ENCODE measurements at regions of chr1 and their contacts with region 1.

Region 1: GRCh38 chr1:181088079-181089016 is at the start of gene IER5:
- DNase-seq: peak; percentile 98 to 99
- H3K4me3 ChIP-seq: peak within 1 kb of the TSS; percentile 71 to 77
- H3K27ac ChIP-seq: peak within 1 kb of the TSS; percentile 93
- H3K4me1 ChIP-seq: peaks cover 30% of the 10 kb centered on the region
- H3K27me3 ChIP-seq: no peaks in the 10 kb centered on the region
- CTCF ChIP-seq: peak in 1 of 3 experiments; percentile 8
- POLR2A ChIP-seq: peak; percentile 90 to 100
- total RNA-seq, gene IER5: 13.0 TPM

Region 2: GRCh38 chr1:180898441-180899219 is 189.7 kb before region 1 on chr1:
- intact Hi-C with region 1: no loop called
- DNase-seq: no peak
- H3K4me3 ChIP-seq: no peak overlapping the region
- H3K27ac ChIP-seq: no peak overlapping the region
- H3K4me1 ChIP-seq: no peaks in the 10 kb centered on the region
- H3K27me3 ChIP-seq: no peaks in the 10 kb centered on the region
- CTCF ChIP-seq: no peak
- POLR2A ChIP-seq: no peak

Region 3: GRCh38 chr1:181033799-181034451 is 54.4 kb before region 1 on chr1 and contains the start of gene MR1:
- intact Hi-C with region 1: loop called (anchors 5 kb)
- DNase-seq: no peak
- H3K4me3 ChIP-seq: peak within 1 kb of the TSS; percentile 32 to 41
- H3K27ac ChIP-seq: peak within 1 kb of the TSS; percentile 95
- H3K4me1 ChIP-seq: peaks cover 46% of the 10 kb centered on the region
- H3K27me3 ChIP-seq: no peaks in the 10 kb centered on the region
- CTCF ChIP-seq: no peak
- POLR2A ChIP-seq: peak; percentile 65 to 66
- total RNA-seq, gene MR1: 12.8 TPM

Region 4: DNA sequence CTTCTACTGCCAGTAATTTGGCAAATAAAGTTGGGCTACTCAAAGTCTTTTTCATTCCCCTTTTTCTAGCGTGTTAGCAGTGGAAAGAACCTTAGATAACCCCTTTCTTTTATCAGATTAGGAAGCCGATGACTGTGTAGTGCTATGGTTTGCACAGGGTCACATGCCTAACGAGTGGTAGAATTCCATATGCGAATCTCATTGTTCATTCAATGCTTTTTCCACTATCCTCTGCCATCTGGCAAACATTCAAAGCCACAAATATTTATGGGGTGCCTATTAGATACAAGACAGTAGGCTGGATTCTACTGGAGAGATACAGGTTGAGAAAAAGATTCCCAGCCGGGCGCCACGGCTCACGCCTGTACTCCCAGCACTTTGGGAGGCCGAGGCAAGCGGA is 14.7 kb before region 1 on chr1:
- intact Hi-C with region 1: no loop called
- DNase-seq: no peak
- H3K4me3 ChIP-seq: no peak overlapping the region
- H3K27ac ChIP-seq: no peak overlapping the region
- H3K4me1 ChIP-seq: no peaks in the 10 kb centered on the region
- H3K27me3 ChIP-seq: no peaks in the 10 kb centered on the region
- CTCF ChIP-seq: no peak
- POLR2A ChIP-seq: no peak

Region 5: GRCh38 chr1:181105134-181106021 is 17.0 kb after region 1 on chr1:
- intact Hi-C with region 1: loop called (anchors 2 kb)
- DNase-seq: no peak
- H3K4me3 ChIP-seq: peak overlapping the region; percentile 68 to 76
- H3K27ac ChIP-seq: peak overlapping the region; percentile 86
- H3K4me1 ChIP-seq: peaks cover 34% of the 10 kb centered on the region
- H3K27me3 ChIP-seq: no peaks in the 10 kb centered on the region
- CTCF ChIP-seq: no peak
- POLR2A ChIP-seq: peak in 1 of 2 donors; percentile 74

Region 6: GRCh38 chr1:181142096-181142958 is 54.0 kb after region 1 on chr1:
- intact Hi-C with region 1: loop called (anchors 2 kb)
- DNase-seq: no peak
- H3K4me3 ChIP-seq: peak overlapping the region; percentile 23 to 27
- H3K27ac ChIP-seq: peak overlapping the region; percentile 78
- H3K4me1 ChIP-seq: peaks cover 34% of the 10 kb centered on the region
- H3K27me3 ChIP-seq: no peaks in the 10 kb centered on the region
- CTCF ChIP-seq: peak; percentile 94 to 98 (median 94)
- POLR2A ChIP-seq: no peak